Naive thymus-derived CD4-positive, alpha-beta T cell (primary cell): ENCODE measurements at regions of chr6 and their contacts with region 1.

Region 1: DNA sequence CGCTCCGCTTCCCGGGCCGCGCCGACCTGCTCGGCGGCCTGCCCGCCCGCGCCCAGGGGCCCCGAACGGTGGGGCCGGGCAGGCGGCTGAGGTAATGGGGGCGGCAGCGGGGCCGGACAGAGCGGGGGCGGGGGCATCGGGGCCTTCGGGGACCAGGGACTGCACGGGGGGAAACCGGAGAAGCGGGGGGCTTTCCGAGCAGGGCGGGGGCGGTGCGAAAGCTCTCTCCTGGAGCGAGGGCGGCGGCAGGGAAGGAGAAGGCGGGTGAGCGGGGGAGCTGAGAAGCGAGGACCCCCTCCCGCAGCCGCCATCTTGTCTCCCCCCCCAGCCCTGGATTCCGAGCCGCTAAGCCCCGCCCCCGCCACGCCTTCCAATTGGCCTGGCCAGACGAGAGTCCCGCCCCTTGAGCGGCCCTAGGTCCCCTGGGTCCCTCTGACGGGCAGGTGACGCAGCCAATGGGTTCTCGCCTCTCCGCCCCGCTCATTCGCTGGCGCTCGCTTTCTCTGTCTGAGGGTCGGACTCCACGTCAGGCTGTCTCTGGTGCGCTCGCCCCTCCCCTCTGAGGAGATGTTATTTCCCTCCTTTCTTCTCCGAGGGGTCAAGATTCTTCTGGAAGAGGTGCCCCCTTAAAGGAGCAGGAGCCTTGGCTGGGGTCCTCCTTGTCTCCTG is 470 bp downstream of the BRPF3 start:
- DNase-seq: peak; percentile 94 to 100 (median 98)
- ATAC-seq: peak; percentile 96
- H3K4me3 ChIP-seq: peak overlapping the region; percentile 81
- H3K4me3 Mint-ChIP-seq: peak overlapping the region; percentile 88 to 95 (median 92)
- H3K27ac ChIP-seq: peak overlapping the region; percentile 84
- H3K27ac Mint-ChIP-seq: peak overlapping the region; percentile 69 to 96 (median 92)
- H3K4me1 ChIP-seq: peaks cover 33 to 36% of the 10 kb centered on the region in 2 donors
- H3K4me1 Mint-ChIP-seq: peaks cover 19 to 59% (median 47%) of the 10 kb centered on the region in 7 donors
- H3K27me3 ChIP-seq: no peaks in the 10 kb centered on the region
- H3K27me3 Mint-ChIP-seq: peaks cover 0 to 3% (median 0%) of the 10 kb centered on the region in 5 donors

Region 2: GRCh38 chr6:35920793-35921732 is 276.0 kb before region 1 on chr6 and contains the start of gene SRPK1:
- CTCF ChIA-PET with region 1: no interaction called
- POLR2A ChIA-PET with region 1: no interaction called
- intact Hi-C with region 1: loop called (anchors 1 to 5 kb)
- DNase-seq: peak; percentile 58 to 92 (median 73)
- ATAC-seq: peak; percentile 87
- H3K4me3 ChIP-seq: peak within 1 kb of the TSS; percentile 98
- H3K4me3 Mint-ChIP-seq: peak within 1 kb of the TSS; percentile 87 to 100 (median 94)
- H3K27ac ChIP-seq: peak within 1 kb of the TSS; percentile 76
- H3K27ac Mint-ChIP-seq: peak within 1 kb of the TSS; percentile 81 to 98 (median 94)
- H3K4me1 ChIP-seq: peaks cover 12 to 28% of the 10 kb centered on the region in 2 donors
- H3K4me1 Mint-ChIP-seq: peaks cover 18 to 49% (median 41%) of the 10 kb centered on the region in 7 donors
- H3K27me3 ChIP-seq: no peaks in the 10 kb centered on the region
- H3K27me3 Mint-ChIP-seq: no peaks in the 10 kb centered on the region
- total RNA-seq, gene SRPK1: 29.1 to 80.9 (median 42.1) TPM

Region 3: GRCh38 chr6:36109092-36109491 is 87.9 kb before region 1 on chr6:
- CTCF ChIA-PET with region 1: no interaction called
- POLR2A ChIA-PET with region 1: interaction called, 6 read pairs
- intact Hi-C with region 1: loop called in 1 of 2 experiments (anchors 1 kb)
- DNase-seq: peak in 7 of 9 donors; percentile 70 to 90 (median 84)
- ATAC-seq: peak; percentile 95
- H3K4me3 ChIP-seq: no peak overlapping the region
- H3K4me3 Mint-ChIP-seq: peak overlapping the region; percentile 34 to 67 (median 51)
- H3K27ac ChIP-seq: peak overlapping the region; percentile 69
- H3K27ac Mint-ChIP-seq: peak overlapping the region; percentile 75 to 98 (median 96)
- H3K4me1 ChIP-seq: peaks cover 27 to 46% of the 10 kb centered on the region in 2 donors
- H3K4me1 Mint-ChIP-seq: peaks cover 27 to 78% (median 54%) of the 10 kb centered on the region in 7 donors
- H3K27me3 ChIP-seq: no peaks in the 10 kb centered on the region
- H3K27me3 Mint-ChIP-seq: no peaks in the 10 kb centered on the region

Region 4: DNA sequence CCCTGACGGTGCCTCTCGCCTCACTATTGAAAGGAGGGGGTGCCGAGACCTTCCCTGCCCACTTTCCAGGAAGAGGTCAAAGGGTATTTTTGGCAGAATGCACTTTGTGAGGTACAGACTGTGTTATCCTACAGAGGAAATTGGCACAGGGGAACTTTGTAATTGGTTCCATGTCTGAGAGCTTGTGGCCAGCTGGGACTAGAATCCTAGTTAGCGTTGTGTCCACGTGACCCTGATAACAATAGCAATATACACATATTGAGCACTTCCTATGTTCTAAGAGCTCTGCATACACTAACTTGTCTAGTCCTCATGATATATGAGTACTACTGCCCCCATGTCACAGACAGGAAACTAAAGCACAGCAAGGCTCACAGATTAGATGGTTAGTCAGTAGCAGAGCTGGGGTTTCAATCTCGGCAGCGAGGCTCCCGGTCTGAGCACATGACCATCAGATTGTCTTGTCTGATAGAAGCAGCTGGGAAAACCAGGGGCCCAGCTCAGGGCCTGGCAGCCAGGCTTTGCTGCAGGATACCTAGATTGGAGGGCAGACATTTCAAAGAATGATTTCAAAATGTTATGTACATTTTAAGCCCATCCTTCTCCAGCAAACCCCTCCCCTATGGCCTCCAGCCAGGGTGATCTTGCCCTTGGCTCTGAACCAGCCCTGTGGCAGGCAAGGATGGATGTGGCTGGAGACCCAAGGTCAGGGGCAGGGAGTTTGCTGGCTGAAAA is 65.3 kb before region 1 on chr6:
- CTCF ChIA-PET with region 1: interaction called, 14 read pairs
- POLR2A ChIA-PET with region 1: interaction called, 10 read pairs
- intact Hi-C with region 1: loop called (anchors 1 kb)
- DNase-seq: peak in 7 of 9 donors; percentile 41 to 58 (median 48)
- ATAC-seq: peak; percentile 67
- H3K4me3 ChIP-seq: peak overlapping the region; percentile 72
- H3K4me3 Mint-ChIP-seq: peak overlapping the region; percentile 85 to 92 (median 88)
- H3K27ac ChIP-seq: peak overlapping the region; percentile 87
- H3K27ac Mint-ChIP-seq: peak overlapping the region; percentile 84 to 96 (median 92)
- H3K4me1 ChIP-seq: peaks cover 24 to 25% of the 10 kb centered on the region in 2 donors
- H3K4me1 Mint-ChIP-seq: peaks cover 37 to 55% (median 49%) of the 10 kb centered on the region in 7 donors
- H3K27me3 ChIP-seq: no peaks in the 10 kb centered on the region
- H3K27me3 Mint-ChIP-seq: no peaks in the 10 kb centered on the region

Region 5: DNA sequence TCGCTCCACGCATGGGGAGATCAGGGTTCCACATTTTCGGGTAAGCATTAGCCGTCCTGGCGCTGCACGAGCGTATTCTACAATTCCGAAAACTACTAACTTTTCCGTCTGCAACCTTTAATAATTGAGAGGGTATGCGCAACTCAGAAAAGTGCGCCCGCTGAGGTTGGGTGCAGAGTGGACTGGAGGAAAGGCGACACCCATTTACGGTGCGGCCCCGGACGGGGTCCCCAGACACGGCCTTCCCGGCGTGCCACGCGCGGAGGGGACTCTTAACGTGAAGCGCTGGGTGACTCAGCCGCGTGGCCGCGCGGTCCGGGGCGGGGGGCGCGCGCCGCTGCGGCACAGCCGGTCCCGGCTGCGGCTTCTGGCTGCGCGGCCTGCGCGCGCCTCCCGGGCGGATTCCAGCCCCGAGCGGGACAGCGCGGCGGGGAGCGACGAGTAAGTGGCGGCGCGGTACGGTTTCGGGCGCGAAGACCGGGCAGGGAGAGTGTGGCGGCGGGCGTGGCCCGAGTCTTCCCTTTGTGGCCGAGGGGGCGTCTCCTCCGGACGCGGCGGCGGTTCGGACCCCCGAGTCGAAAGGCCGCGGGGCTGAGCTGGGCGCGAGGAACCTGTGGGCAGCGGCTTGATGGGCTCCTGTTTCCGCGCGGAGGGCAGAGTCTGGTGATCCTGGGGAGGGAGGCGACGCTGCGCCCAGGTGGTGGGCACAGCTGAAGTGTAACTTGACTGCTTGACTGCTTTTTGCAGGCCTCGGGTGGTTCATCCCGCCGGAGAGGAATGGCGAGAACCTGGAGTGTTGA is 245.9 kb after region 1 on chr6 and contains the starts of genes KCTD20 and PXT1:
- CTCF ChIA-PET with region 1: no interaction called
- POLR2A ChIA-PET with region 1: no interaction called
- intact Hi-C with region 1: loop called in 1 of 2 experiments (anchors 5 kb)
- DNase-seq: peak; percentile 78 to 89 (median 83)
- ATAC-seq: peak; percentile 91
- H3K4me3 ChIP-seq: peak within 1 kb of the TSS; percentile 69
- H3K4me3 Mint-ChIP-seq: peak within 1 kb of the TSS; percentile 85 to 99 (median 96)
- H3K27ac ChIP-seq: peak within 1 kb of the TSS; percentile 97
- H3K27ac Mint-ChIP-seq: peak within 1 kb of the TSS; percentile 92 to 99 (median 97)
- H3K4me1 ChIP-seq: peaks cover 20 to 31% of the 10 kb centered on the region in 2 donors
- H3K4me1 Mint-ChIP-seq: peaks cover 28 to 56% (median 50%) of the 10 kb centered on the region in 7 donors
- H3K27me3 ChIP-seq: no peaks in the 10 kb centered on the region
- H3K27me3 Mint-ChIP-seq: no peaks in the 10 kb centered on the region
- total RNA-seq, gene KCTD20: 33.0 to 55.8 (median 33.2) TPM
- total RNA-seq, gene PXT1: 0.15 to 0.64 (median 0.32) TPM

Region 6: GRCh38 chr6:37029249-37029971 is 832.4 kb after region 1 on chr6:
- CTCF ChIA-PET with region 1: no interaction called
- POLR2A ChIA-PET with region 1: no interaction called
- intact Hi-C with region 1: no loop called
- DNase-seq: peak in 1 of 9 donors; percentile 54
- ATAC-seq: peak; percentile 92
- H3K4me3 ChIP-seq: no peak overlapping the region
- H3K4me3 Mint-ChIP-seq: peak overlapping the region in 1 of 10 donors; percentile 23
- H3K27ac ChIP-seq: no peak overlapping the region
- H3K27ac Mint-ChIP-seq: peak overlapping the region in 3 of 9 donors; percentile 22 to 84 (median 23)
- H3K4me1 ChIP-seq: peaks cover 5 to 14% of the 10 kb centered on the region in 2 donors
- H3K4me1 Mint-ChIP-seq: peaks cover 4 to 70% (median 14%) of the 10 kb centered on the region in 7 donors
- H3K27me3 ChIP-seq: no peaks in the 10 kb centered on the region
- H3K27me3 Mint-ChIP-seq: no peaks in the 10 kb centered on the region

Region 7: DNA sequence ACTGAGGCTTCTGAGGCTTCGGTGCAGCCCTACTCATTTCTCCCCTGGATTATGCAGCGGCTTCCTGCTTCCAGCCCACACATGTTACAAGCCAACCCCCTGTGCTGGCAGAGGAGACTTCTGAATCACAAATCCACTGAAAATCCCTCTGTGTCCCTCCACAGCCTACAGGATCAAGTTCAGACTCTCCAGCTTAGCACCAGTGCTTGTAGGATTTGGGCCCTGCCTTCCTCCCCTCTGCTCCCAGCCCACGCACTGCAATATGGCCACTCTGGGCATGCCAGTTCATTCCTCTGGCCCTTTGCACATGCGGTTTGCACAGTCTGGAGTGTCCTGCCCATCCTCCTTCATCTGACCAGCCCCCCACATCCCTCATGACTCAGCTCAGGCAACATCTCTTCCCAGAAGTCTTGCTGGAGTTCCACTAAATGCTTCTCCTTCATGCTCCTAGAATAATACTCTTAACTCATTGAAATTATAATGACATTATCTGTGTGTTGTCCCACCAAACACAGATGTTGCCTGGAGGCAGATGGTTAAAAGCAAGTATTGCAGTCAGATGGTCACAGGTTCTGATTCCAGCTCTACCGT is 1516.6 kb after region 1 on chr6:
- CTCF ChIA-PET with region 1: no interaction called
- POLR2A ChIA-PET with region 1: no interaction called
- intact Hi-C with region 1: no loop called
- DNase-seq: no peak
- ATAC-seq: no peak
- H3K4me3 ChIP-seq: no peak overlapping the region
- H3K4me3 Mint-ChIP-seq: no peak overlapping the region
- H3K27ac ChIP-seq: no peak overlapping the region
- H3K27ac Mint-ChIP-seq: no peak overlapping the region
- H3K4me1 ChIP-seq: no peaks in the 10 kb centered on the region
- H3K4me1 Mint-ChIP-seq: peaks cover 0 to 9% (median 0%) of the 10 kb centered on the region in 7 donors
- H3K27me3 ChIP-seq: no peaks in the 10 kb centered on the region
- H3K27me3 Mint-ChIP-seq: peaks cover 0 to 12% (median 4%) of the 10 kb centered on the region in 5 donors